CD14-positive monocyte (primary cell): ENCODE measurements at regions of chr9 and their contacts with region 1.

Region 1: GRCh38 chr9:114681594-114682332 is at the start of gene TEX48:
- DNase-seq: peak; percentile 69 to 76 (median 75)
- H3K4me3 ChIP-seq: no peak within 1 kb of the TSS
- H3K4me3 Mint-ChIP-seq: no peak within 1 kb of the TSS
- H3K27ac ChIP-seq: no peak within 1 kb of the TSS
- H3K27ac Mint-ChIP-seq: peak within 1 kb of the TSS in 3 of 7 donors; percentile 56 to 75 (median 74)
- H3K4me1 ChIP-seq: peaks cover 0 to 3% of the 10 kb centered on the region in 2 donors
- H3K4me1 Mint-ChIP-seq: peaks cover 10% of the 10 kb centered on the region
- H3K27me3 ChIP-seq: no peaks in the 10 kb centered on the region
- H3K27me3 Mint-ChIP-seq: peaks cover 0 to 4% (median 0%) of the 10 kb centered on the region in 3 donors
- CTCF ChIP-seq: peak; percentile 89
- polyA plus RNA-seq, gene TEX48: not detected

Region 2: GRCh38 chr9:114633438-114634089 is 48.2 kb before region 1 on chr9:
- intact Hi-C with region 1: no loop called
- DNase-seq: no peak
- H3K4me3 ChIP-seq: no peak overlapping the region
- H3K4me3 Mint-ChIP-seq: no peak overlapping the region
- H3K27ac ChIP-seq: no peak overlapping the region
- H3K27ac Mint-ChIP-seq: no peak overlapping the region
- H3K4me1 ChIP-seq: no peaks in the 10 kb centered on the region
- H3K4me1 Mint-ChIP-seq: no peaks in the 10 kb centered on the region
- H3K27me3 ChIP-seq: no peaks in the 10 kb centered on the region
- H3K27me3 Mint-ChIP-seq: peaks cover 0 to 3% (median 2%) of the 10 kb centered on the region in 3 donors
- CTCF ChIP-seq: no peak

Region 3: GRCh38 chr9:114696814-114697544 is 15.2 kb after region 1 on chr9:
- intact Hi-C with region 1: no loop called
- DNase-seq: no peak
- H3K4me3 ChIP-seq: no peak overlapping the region
- H3K4me3 Mint-ChIP-seq: no peak overlapping the region
- H3K27ac ChIP-seq: no peak overlapping the region
- H3K27ac Mint-ChIP-seq: peak overlapping the region in 1 of 7 donors; percentile 82
- H3K4me1 ChIP-seq: no peaks in the 10 kb centered on the region
- H3K4me1 Mint-ChIP-seq: peaks cover 3% of the 10 kb centered on the region
- H3K27me3 ChIP-seq: no peaks in the 10 kb centered on the region
- H3K27me3 Mint-ChIP-seq: peaks cover 0 to 2% (median 0%) of the 10 kb centered on the region in 3 donors
- CTCF ChIP-seq: no peak

Region 4: GRCh38 chr9:114906908-114907571 is 225.3 kb after region 1 on chr9:
- intact Hi-C with region 1: loop called (anchors 10 kb)
- DNase-seq: no peak
- H3K4me3 ChIP-seq: no peak overlapping the region
- H3K4me3 Mint-ChIP-seq: no peak overlapping the region
- H3K27ac ChIP-seq: no peak overlapping the region
- H3K27ac Mint-ChIP-seq: peak overlapping the region in 2 of 7 donors; percentile 24 to 46
- H3K4me1 ChIP-seq: peaks cover 0 to 7% of the 10 kb centered on the region in 2 donors
- H3K4me1 Mint-ChIP-seq: peaks cover 40% of the 10 kb centered on the region
- H3K27me3 ChIP-seq: no peaks in the 10 kb centered on the region
- H3K27me3 Mint-ChIP-seq: no peaks in the 10 kb centered on the region
- CTCF ChIP-seq: peak; percentile 33

Region 5: GRCh38 chr9:115013998-115014397 is 332.2 kb after region 1 on chr9:
- intact Hi-C with region 1: loop called (anchors 2 to 5 kb)
- DNase-seq: peak; percentile 74 to 84 (median 83)
- H3K4me3 ChIP-seq: no peak overlapping the region
- H3K4me3 Mint-ChIP-seq: no peak overlapping the region
- H3K27ac ChIP-seq: no peak overlapping the region
- H3K27ac Mint-ChIP-seq: peak overlapping the region in 2 of 7 donors; percentile 4 to 71
- H3K4me1 ChIP-seq: peaks cover 6 to 14% of the 10 kb centered on the region in 2 donors
- H3K4me1 Mint-ChIP-seq: peaks cover 50% of the 10 kb centered on the region
- H3K27me3 ChIP-seq: no peaks in the 10 kb centered on the region
- H3K27me3 Mint-ChIP-seq: peaks cover 2 to 3% (median 3%) of the 10 kb centered on the region in 3 donors
- CTCF ChIP-seq: peak; percentile 84

Region 6: GRCh38 chr9:115524453-115525059 is 842.8 kb after region 1 on chr9:
- intact Hi-C with region 1: loop called (anchors 10 kb)
- DNase-seq: peak in 2 of 3 donors; percentile 3 to 4
- H3K4me3 ChIP-seq: no peak overlapping the region
- H3K4me3 Mint-ChIP-seq: no peak overlapping the region
- H3K27ac ChIP-seq: no peak overlapping the region
- H3K27ac Mint-ChIP-seq: no peak overlapping the region
- H3K4me1 ChIP-seq: no peaks in the 10 kb centered on the region
- H3K4me1 Mint-ChIP-seq: no peaks in the 10 kb centered on the region
- H3K27me3 ChIP-seq: no peaks in the 10 kb centered on the region
- H3K27me3 Mint-ChIP-seq: no peaks in the 10 kb centered on the region
- CTCF ChIP-seq: peak; percentile 52